ENCODE measurements at regions of chr17 and their contacts with region 1.

Region 1: GRCh38 chr17:35119368-35120165 is at the start of gene RAD51D:
- DNase-seq: peak; percentile 90
- ATAC-seq: peak; percentile 88
- H3K4me3 Mint-ChIP-seq: peak within 1 kb of the TSS; percentile 85
- H3K27ac Mint-ChIP-seq: peak within 1 kb of the TSS; percentile 92
- H3K4me1 Mint-ChIP-seq: peaks cover 33% of the 10 kb centered on the region
- H3K27me3 Mint-ChIP-seq: no peaks in the 10 kb centered on the region
- total RNA-seq, gene RAD51D: 19.9 to 31.8 TPM

Region 2: DNA sequence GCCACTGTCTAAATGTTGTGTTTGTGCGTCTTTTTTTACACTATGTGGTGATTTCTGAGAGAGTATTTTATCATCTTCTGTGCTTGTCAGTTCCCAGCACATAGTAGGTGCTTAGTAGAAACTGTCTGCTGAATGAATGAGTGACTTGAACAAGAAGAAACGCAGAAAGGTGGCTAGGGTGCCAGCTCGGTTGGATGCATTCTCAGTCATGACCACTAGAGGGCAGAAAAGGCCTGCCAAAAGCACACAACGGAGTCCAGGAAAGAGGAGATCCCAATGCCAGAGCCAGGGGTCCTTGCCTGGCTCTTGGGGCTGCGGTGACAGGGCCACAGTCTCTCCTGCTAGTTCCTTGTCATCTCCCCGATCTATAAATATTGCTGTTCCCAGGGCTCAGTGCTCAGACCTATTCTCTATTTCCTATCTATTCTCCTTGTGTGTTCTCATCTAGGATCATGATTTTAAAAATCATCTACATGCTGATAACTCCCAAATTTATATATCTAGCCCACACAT is 699.3 kb before region 1 on chr17:
- CTCF ChIA-PET with region 1: interaction called, 9 read pairs
- POLR2A ChIA-PET with region 1: no interaction called
- intact Hi-C with region 1: loop called (anchors 1 to 2 kb)
- DNase-seq: peak; percentile 78
- ATAC-seq: peak; percentile 55
- H3K4me3 Mint-ChIP-seq: no peak overlapping the region
- H3K27ac Mint-ChIP-seq: no peak overlapping the region
- H3K4me1 Mint-ChIP-seq: no peaks in the 10 kb centered on the region
- H3K27me3 Mint-ChIP-seq: peaks cover 27% of the 10 kb centered on the region

Region 3: DNA sequence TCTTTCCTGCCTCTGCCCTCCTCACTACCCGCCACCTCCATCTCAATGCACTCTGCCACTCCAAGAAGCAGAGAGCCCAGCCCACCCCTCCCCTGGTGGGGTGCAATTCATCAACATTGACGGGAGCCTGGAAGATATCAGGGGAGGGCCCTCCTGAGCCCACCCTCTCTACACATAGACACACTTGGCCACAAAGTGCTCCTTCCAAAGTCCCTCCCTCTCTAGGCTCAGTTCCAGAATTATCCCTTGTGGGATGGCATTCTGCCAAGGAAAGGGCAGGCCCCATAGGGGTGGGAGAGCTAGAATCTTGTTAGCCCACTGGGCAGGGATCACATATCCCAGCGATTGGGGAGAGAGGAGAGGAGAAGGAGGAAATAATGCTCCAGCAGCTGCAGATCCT is 474.0 kb before region 1 on chr17:
- CTCF ChIA-PET with region 1: no interaction called
- POLR2A ChIA-PET with region 1: no interaction called
- intact Hi-C with region 1: no loop called
- DNase-seq: no peak
- ATAC-seq: no peak
- H3K4me3 Mint-ChIP-seq: no peak overlapping the region
- H3K27ac Mint-ChIP-seq: no peak overlapping the region
- H3K4me1 Mint-ChIP-seq: no peaks in the 10 kb centered on the region
- H3K27me3 Mint-ChIP-seq: peaks cover 10% of the 10 kb centered on the region

Region 4: GRCh38 chr17:34692920-34693319 is 426.6 kb before region 1 on chr17:
- CTCF ChIA-PET with region 1: no interaction called
- POLR2A ChIA-PET with region 1: no interaction called
- intact Hi-C with region 1: no loop called
- DNase-seq: no peak
- ATAC-seq: peak; percentile 49
- H3K4me3 Mint-ChIP-seq: no peak overlapping the region
- H3K27ac Mint-ChIP-seq: no peak overlapping the region
- H3K4me1 Mint-ChIP-seq: no peaks in the 10 kb centered on the region
- H3K27me3 Mint-ChIP-seq: peaks cover 19% of the 10 kb centered on the region

Region 5: GRCh38 chr17:34820922-34821321 is 298.6 kb before region 1 on chr17:
- CTCF ChIA-PET with region 1: no interaction called
- POLR2A ChIA-PET with region 1: no interaction called
- intact Hi-C with region 1: loop called in 1 of 2 experiments (anchors 5 kb)
- DNase-seq: no peak
- ATAC-seq: no peak
- H3K4me3 Mint-ChIP-seq: no peak overlapping the region
- H3K27ac Mint-ChIP-seq: no peak overlapping the region
- H3K4me1 Mint-ChIP-seq: peaks cover 11% of the 10 kb centered on the region
- H3K27me3 Mint-ChIP-seq: peaks cover 4% of the 10 kb centered on the region

Region 6: GRCh38 chr17:34980681-34981537 is 138.7 kb before region 1 on chr17:
- CTCF ChIA-PET with region 1: interaction called, 25 read pairs
- POLR2A ChIA-PET with region 1: interaction called, 3 read pairs
- intact Hi-C with region 1: loop called in 1 of 2 experiments (anchors 1 kb)
- DNase-seq: peak; percentile 82
- ATAC-seq: peak; percentile 82
- H3K4me3 Mint-ChIP-seq: peak overlapping the region; percentile 86
- H3K27ac Mint-ChIP-seq: peak overlapping the region; percentile 93
- H3K4me1 Mint-ChIP-seq: peaks cover 50% of the 10 kb centered on the region
- H3K27me3 Mint-ChIP-seq: no peaks in the 10 kb centered on the region

Region 7: GRCh38 chr17:35022536-35023063 is 97.0 kb before region 1 on chr17:
- CTCF ChIA-PET with region 1: interaction called, 28 read pairs
- POLR2A ChIA-PET with region 1: interaction called, 4 read pairs
- intact Hi-C with region 1: no loop called
- DNase-seq: peak; percentile 89
- ATAC-seq: peak; percentile 100
- H3K4me3 Mint-ChIP-seq: peak overlapping the region; percentile 67
- H3K27ac Mint-ChIP-seq: peak overlapping the region; percentile 99
- H3K4me1 Mint-ChIP-seq: peaks cover 44% of the 10 kb centered on the region
- H3K27me3 Mint-ChIP-seq: no peaks in the 10 kb centered on the region

Region 8: DNA sequence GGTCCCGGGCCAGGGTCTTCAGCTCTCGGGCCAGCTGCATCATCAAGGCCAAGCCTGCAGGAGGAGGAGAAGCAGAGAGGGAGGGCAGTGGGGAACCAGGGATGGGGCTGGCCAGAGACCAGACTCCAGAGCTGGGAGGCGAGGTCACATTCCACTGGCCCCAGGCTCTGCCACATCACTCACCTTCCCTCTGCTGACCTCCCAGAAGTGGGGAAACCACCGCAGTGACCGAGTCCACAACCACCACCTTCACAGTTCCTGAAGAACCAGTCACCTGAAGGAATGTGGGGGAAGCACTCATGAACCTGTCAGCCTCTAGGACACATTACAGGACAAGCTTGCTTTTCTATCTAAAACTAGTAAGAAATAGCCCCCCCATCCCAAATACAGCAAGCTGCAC is 16.3 kb before region 1 on chr17:
- CTCF ChIA-PET with region 1: interaction called, 10 read pairs
- POLR2A ChIA-PET with region 1: interaction called, 5 read pairs
- intact Hi-C with region 1: no loop called
- DNase-seq: no peak
- ATAC-seq: no peak
- H3K4me3 Mint-ChIP-seq: no peak overlapping the region
- H3K27ac Mint-ChIP-seq: no peak overlapping the region
- H3K4me1 Mint-ChIP-seq: peaks cover 5% of the 10 kb centered on the region
- H3K27me3 Mint-ChIP-seq: no peaks in the 10 kb centered on the region

Region 9: DNA sequence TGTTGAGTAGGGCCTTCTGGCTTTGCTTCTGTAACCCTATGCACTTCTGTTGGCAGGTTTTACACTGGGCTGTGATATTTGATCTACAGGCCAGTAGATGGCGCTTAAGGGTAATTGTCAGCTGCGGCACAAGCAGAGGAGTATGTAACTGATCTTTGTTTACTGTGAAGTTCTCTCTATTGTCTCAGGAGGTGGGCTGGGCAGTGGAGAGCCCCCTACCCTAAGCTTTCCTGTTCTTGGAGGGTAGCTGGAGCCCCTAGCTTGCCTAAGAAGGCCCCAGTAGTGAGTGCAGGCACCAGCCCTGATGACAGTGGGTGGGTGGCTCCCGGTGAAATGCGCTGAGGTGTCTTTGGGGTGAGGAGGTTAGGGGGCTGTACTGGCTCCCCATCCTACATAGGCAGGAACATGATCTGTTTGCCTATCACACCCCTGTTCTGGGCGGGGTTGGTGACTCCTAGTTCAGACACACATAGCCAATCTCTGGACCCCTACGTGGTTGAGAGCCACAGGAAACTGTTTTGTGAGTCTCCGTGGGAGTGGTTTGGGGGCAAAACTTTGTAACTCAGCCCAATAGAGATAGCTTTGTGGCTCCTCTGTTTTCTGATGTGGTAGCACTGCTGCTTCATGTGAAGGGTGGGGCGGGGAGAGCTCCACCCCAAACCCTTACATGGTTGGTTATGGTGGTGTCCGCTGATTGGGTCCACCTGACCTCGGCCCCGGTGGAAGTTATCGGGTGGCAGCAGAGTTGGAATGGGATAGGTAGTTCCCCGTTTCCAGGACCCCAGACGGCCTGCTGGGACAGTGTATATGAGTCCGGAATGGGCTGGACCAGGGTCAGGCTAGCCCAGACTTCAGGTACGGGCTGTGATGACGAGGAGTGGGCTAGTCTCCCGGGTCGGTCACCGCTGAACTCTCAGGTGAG is 193.5 kb after region 1 on chr17:
- CTCF ChIA-PET with region 1: no interaction called
- POLR2A ChIA-PET with region 1: no interaction called
- intact Hi-C with region 1: no loop called
- DNase-seq: peak; percentile 77
- ATAC-seq: peak; percentile 86
- H3K4me3 Mint-ChIP-seq: peak overlapping the region; percentile 73
- H3K27ac Mint-ChIP-seq: peak overlapping the region; percentile 86
- H3K4me1 Mint-ChIP-seq: peaks cover 28% of the 10 kb centered on the region
- H3K27me3 Mint-ChIP-seq: no peaks in the 10 kb centered on the region

Measured in activated CD4-positive, alpha-beta T cell treated with anti-CD3 and anti-CD28 coated beads for 36 hours (primary cell).